A673 (cell line): ENCODE measurements at regions of chr7 and their contacts with region 1.

Region 1: DNA sequence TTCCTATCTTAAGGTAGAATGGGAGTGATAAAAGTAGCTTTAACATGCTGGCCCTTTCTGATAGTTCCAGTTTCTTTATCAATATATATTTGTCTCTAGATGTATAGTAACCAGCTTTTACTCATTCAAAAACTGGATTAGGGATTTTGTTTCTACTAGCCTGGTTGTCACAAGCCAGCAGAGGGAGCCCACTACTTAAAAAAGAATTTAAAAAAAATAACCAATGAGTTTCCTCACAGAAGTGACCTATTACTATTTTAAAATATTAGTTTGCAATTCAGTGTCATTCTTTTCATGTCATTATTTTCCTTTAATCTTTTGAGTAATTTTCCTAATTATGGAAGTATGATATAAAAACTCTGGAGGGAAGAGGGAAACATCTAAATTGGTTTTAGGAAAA is 142.1 kb downstream of the PHTF2 start:
- DNase-seq: peak; percentile 68
- H3K4me3 ChIP-seq: no peak overlapping the region
- H3K27ac ChIP-seq: no peak overlapping the region
- H3K4me1 ChIP-seq: no peaks in the 10 kb centered on the region
- H3K27me3 ChIP-seq: no peaks in the 10 kb centered on the region
- CTCF ChIP-seq: peak; percentile 78

Region 2: GRCh38 chr7:77798394-77799077 is 142.1 kb before region 1 on chr7 and contains the starts of genes PHTF2 and TMEM60:
- CTCF ChIA-PET with region 1: no interaction called
- POLR2A ChIA-PET with region 1: no interaction called
- intact Hi-C with region 1: loop called (anchors 10 kb)
- DNase-seq: peak; percentile 100
- H3K4me3 ChIP-seq: peak within 1 kb of the TSS; percentile 63
- H3K27ac ChIP-seq: peak within 1 kb of the TSS; percentile 90
- H3K4me1 ChIP-seq: peaks cover 13% of the 10 kb centered on the region
- H3K27me3 ChIP-seq: no peaks in the 10 kb centered on the region
- CTCF ChIP-seq: peak; percentile 69
- total RNA-seq, gene PHTF2: 34.4 and 36.6 TPM in 2 replicates
- total RNA-seq, gene TMEM60: 13.4 and 14.8 TPM in 2 replicates

Region 3: GRCh38 chr7:78039790-78040776 is 99.4 kb after region 1 on chr7:
- CTCF ChIA-PET with region 1: interaction called, 3 read pairs
- POLR2A ChIA-PET with region 1: no interaction called
- intact Hi-C with region 1: loop called (anchors 2 kb)
- DNase-seq: peak; percentile 48
- H3K4me3 ChIP-seq: no peak overlapping the region
- H3K27ac ChIP-seq: no peak overlapping the region
- H3K4me1 ChIP-seq: no peaks in the 10 kb centered on the region
- H3K27me3 ChIP-seq: no peaks in the 10 kb centered on the region
- CTCF ChIP-seq: peak; percentile 70